Activated CD4-positive, alpha-beta T cell treated with anti-CD3 and anti-CD28 coated beads for 36 hours (primary cell): ENCODE measurements at regions of chr1 and their contacts with region 1.

Region 1: DNA sequence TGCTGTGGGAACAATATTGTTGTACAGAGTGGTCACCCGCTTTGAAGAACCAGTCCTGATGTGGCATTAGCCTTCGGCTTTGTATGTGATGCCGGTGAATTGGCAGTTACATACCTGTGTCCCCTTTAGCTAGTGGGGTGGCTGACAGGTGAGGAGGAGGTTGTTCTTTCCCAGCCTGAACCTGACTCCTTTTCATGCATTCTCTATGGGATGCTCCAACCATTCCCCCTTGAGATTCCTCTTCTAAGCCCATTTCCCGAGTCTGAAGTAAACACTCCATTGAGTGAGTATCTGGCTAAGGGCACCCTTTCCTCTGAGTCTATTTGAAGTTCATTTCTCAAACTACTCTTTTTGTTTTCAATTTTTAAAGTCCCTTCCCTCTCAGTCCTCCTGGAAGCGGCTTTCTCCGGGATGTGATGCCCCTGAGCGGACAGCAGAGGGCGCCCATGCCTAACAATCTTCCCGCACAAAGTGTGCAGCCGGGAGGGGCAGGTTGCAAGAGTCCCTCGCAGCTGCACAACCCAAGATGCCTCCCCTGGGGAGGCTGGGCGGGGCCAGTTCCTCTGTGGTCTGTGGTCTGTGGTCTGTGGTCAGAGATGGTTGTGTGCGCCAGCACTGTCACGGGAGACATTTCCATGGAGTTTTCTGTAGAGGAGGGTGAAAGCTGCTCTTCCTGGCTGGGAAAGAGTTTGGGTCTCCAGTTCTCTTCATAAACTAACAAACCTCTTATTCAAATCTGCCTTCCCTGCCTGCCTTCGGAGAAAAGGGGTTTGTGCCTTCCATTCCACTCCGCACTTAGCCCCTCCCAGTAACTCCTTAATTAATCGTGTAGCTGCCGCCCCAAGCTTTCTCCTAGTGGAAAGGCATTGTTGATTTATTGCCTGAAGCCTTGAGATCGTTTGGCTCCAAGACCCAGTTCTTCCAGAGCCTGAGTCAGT is 36.4 kb upstream of the LMX1A start:
- DNase-seq: peak; percentile 93
- ATAC-seq: peak; percentile 95
- H3K4me3 Mint-ChIP-seq: peak overlapping the region; percentile 62
- H3K27ac Mint-ChIP-seq: peak overlapping the region; percentile 43
- H3K4me1 Mint-ChIP-seq: peaks cover 15% of the 10 kb centered on the region
- H3K27me3 Mint-ChIP-seq: peaks cover 67% of the 10 kb centered on the region

Region 2: GRCh38 chr1:165152727-165153126 is 240.2 kb before region 1 on chr1:
- CTCF ChIA-PET with region 1: no interaction called
- POLR2A ChIA-PET with region 1: no interaction called
- intact Hi-C with region 1: no loop called
- DNase-seq: no peak
- ATAC-seq: no peak
- H3K4me3 Mint-ChIP-seq: no peak overlapping the region
- H3K27ac Mint-ChIP-seq: no peak overlapping the region
- H3K4me1 Mint-ChIP-seq: no peaks in the 10 kb centered on the region
- H3K27me3 Mint-ChIP-seq: no peaks in the 10 kb centered on the region

Region 3: GRCh38 chr1:165580941-165581871 is 188.3 kb after region 1 on chr1:
- CTCF ChIA-PET with region 1: interaction called, 15 read pairs
- POLR2A ChIA-PET with region 1: interaction called, 3 read pairs
- intact Hi-C with region 1: no loop called
- DNase-seq: no peak
- ATAC-seq: no peak
- H3K4me3 Mint-ChIP-seq: no peak overlapping the region
- H3K27ac Mint-ChIP-seq: no peak overlapping the region
- H3K4me1 Mint-ChIP-seq: no peaks in the 10 kb centered on the region
- H3K27me3 Mint-ChIP-seq: peaks cover 11% of the 10 kb centered on the region

Region 4: GRCh38 chr1:165586435-165586834 is 193.5 kb after region 1 on chr1:
- CTCF ChIA-PET with region 1: interaction called, 150 read pairs
- POLR2A ChIA-PET with region 1: interaction called, 3 read pairs
- intact Hi-C with region 1: no loop called
- DNase-seq: no peak
- ATAC-seq: no peak
- H3K4me3 Mint-ChIP-seq: no peak overlapping the region
- H3K27ac Mint-ChIP-seq: no peak overlapping the region
- H3K4me1 Mint-ChIP-seq: no peaks in the 10 kb centered on the region
- H3K27me3 Mint-ChIP-seq: peaks cover 32% of the 10 kb centered on the region